Naive thymus-derived CD4-positive, alpha-beta T cell (primary cell): ENCODE measurements at regions of chr17 and their contacts with region 1.

Region 1: GRCh38 chr17:80195731-80196529 is 24.2 kb downstream of the SGSH start:
- DNase-seq: peak; percentile 33 to 64 (median 54)
- ATAC-seq: peak; percentile 80
- H3K4me3 ChIP-seq: no peak overlapping the region
- H3K4me3 Mint-ChIP-seq: no peak overlapping the region
- H3K27ac ChIP-seq: no peak overlapping the region
- H3K27ac Mint-ChIP-seq: peak overlapping the region in 5 of 9 donors; percentile 12 to 81 (median 68)
- H3K4me1 ChIP-seq: no peaks in the 10 kb centered on the region
- H3K4me1 Mint-ChIP-seq: peaks cover 0 to 5% (median 0%) of the 10 kb centered on the region in 7 donors
- H3K27me3 ChIP-seq: no peaks in the 10 kb centered on the region
- H3K27me3 Mint-ChIP-seq: peaks cover 0 to 12% (median 7%) of the 10 kb centered on the region in 5 donors

Region 2: DNA sequence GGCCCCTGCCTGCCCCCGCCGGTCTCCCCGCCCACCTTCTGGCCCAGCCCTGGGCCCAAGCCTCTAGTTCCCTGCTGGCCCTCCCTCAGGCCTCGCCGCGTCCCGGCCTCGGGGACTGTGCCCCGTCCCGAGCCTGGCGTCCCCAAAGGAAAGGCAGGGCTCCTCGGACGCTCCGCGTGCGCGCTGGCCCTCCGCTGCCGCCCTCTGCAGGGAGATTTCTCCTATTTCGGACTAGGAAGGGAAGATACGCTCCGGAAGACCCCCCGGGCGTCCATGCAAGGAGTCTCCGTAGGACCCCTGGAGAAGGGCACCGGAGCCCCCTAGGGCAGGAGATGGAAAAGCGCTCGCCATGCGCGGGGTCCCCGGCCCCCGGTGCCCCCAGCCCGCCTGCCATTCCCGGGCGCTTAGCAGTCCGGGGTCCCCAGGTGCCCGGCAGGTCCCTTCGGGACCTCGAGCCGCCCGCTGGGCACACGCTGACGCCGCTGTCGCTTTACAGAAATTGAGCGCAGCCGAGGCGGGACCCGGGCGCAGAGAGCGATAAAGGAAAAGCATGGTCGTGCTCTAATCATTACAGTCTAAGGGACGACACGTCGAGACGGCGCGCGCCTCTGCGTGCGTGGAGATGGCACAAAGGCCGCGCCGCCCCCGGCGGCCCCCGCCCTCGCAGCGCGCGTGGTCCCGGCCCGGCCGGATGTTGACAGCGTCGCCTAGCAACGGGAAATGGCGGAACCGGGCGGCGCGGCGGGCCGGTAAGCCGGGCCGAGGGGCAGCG is 159.8 kb before region 1 on chr17 and contains the start of gene CCDC40:
- CTCF ChIA-PET with region 1: no interaction called
- POLR2A ChIA-PET with region 1: no interaction called
- intact Hi-C with region 1: no loop called
- DNase-seq: peak; percentile 66 to 85 (median 78)
- ATAC-seq: peak; percentile 91
- H3K4me3 ChIP-seq: peak within 1 kb of the TSS; percentile 81
- H3K4me3 Mint-ChIP-seq: peak within 1 kb of the TSS; percentile 78 to 94 (median 85)
- H3K27ac ChIP-seq: peak within 1 kb of the TSS; percentile 76
- H3K27ac Mint-ChIP-seq: peak within 1 kb of the TSS; percentile 60 to 96 (median 84)
- H3K4me1 ChIP-seq: peaks cover 4 to 6% of the 10 kb centered on the region in 2 donors
- H3K4me1 Mint-ChIP-seq: peaks cover 5 to 18% (median 9%) of the 10 kb centered on the region in 7 donors
- H3K27me3 ChIP-seq: peaks cover 0 to 3% of the 10 kb centered on the region in 2 donors
- H3K27me3 Mint-ChIP-seq: peaks cover 0 to 63% (median 10%) of the 10 kb centered on the region in 5 donors
- total RNA-seq, gene CCDC40: 0.43 to 3.0 (median 0.79) TPM

Region 3: GRCh38 chr17:80219013-80219762 is 23.3 kb after region 1 on chr17:
- CTCF ChIA-PET with region 1: interaction called, 3 read pairs
- POLR2A ChIA-PET with region 1: interaction called, 5 read pairs
- intact Hi-C with region 1: loop called in 1 of 2 experiments (anchors 1 kb)
- DNase-seq: peak; percentile 77 to 90 (median 86)
- ATAC-seq: peak; percentile 90
- H3K4me3 ChIP-seq: peak overlapping the region; percentile 84
- H3K4me3 Mint-ChIP-seq: peak overlapping the region; percentile 86 to 96 (median 92)
- H3K27ac ChIP-seq: peak overlapping the region; percentile 93
- H3K27ac Mint-ChIP-seq: peak overlapping the region; percentile 86 to 98 (median 95)
- H3K4me1 ChIP-seq: peaks cover 13 to 30% of the 10 kb centered on the region in 2 donors
- H3K4me1 Mint-ChIP-seq: peaks cover 21 to 40% (median 26%) of the 10 kb centered on the region in 7 donors
- H3K27me3 ChIP-seq: no peaks in the 10 kb centered on the region
- H3K27me3 Mint-ChIP-seq: peaks cover 0 to 3% (median 0%) of the 10 kb centered on the region in 5 donors

Region 4: GRCh38 chr17:80361495-80362220 is 165.7 kb after region 1 on chr17:
- CTCF ChIA-PET with region 1: interaction called, 5 read pairs
- POLR2A ChIA-PET with region 1: no interaction called
- intact Hi-C with region 1: loop called in 1 of 2 experiments (anchors 1 kb)
- DNase-seq: peak in 4 of 9 donors; percentile 10 to 21 (median 18)
- ATAC-seq: no peak
- H3K4me3 ChIP-seq: no peak overlapping the region
- H3K4me3 Mint-ChIP-seq: no peak overlapping the region
- H3K27ac ChIP-seq: no peak overlapping the region
- H3K27ac Mint-ChIP-seq: peak overlapping the region in 2 of 9 donors; percentile 28 to 55
- H3K4me1 ChIP-seq: no peaks in the 10 kb centered on the region
- H3K4me1 Mint-ChIP-seq: no peaks in the 10 kb centered on the region
- H3K27me3 ChIP-seq: no peaks in the 10 kb centered on the region
- H3K27me3 Mint-ChIP-seq: no peaks in the 10 kb centered on the region

Region 5: GRCh38 chr17:80414803-80415625 is 219.1 kb after region 1 on chr17 and contains the start of gene ENDOV:
- CTCF ChIA-PET with region 1: no interaction called
- POLR2A ChIA-PET with region 1: no interaction called
- intact Hi-C with region 1: no loop called
- DNase-seq: peak; percentile 87 to 97 (median 92)
- ATAC-seq: peak; percentile 94
- H3K4me3 ChIP-seq: peak within 1 kb of the TSS; percentile 74
- H3K4me3 Mint-ChIP-seq: peak within 1 kb of the TSS; percentile 78 to 92 (median 88)
- H3K27ac ChIP-seq: peak within 1 kb of the TSS; percentile 83
- H3K27ac Mint-ChIP-seq: peak within 1 kb of the TSS; percentile 47 to 94 (median 77)
- H3K4me1 ChIP-seq: peaks cover 4 to 16% of the 10 kb centered on the region in 2 donors
- H3K4me1 Mint-ChIP-seq: peaks cover 12 to 40% (median 32%) of the 10 kb centered on the region in 7 donors
- H3K27me3 ChIP-seq: peaks cover 0 to 4% of the 10 kb centered on the region in 2 donors
- H3K27me3 Mint-ChIP-seq: peaks cover 5 to 32% (median 15%) of the 10 kb centered on the region in 5 donors
- total RNA-seq, gene ENDOV: 20.3 to 26.5 (median 21.7) TPM

Region 6: GRCh38 chr17:80981062-80981902 is 785.4 kb after region 1 on chr17:
- CTCF ChIA-PET with region 1: no interaction called
- POLR2A ChIA-PET with region 1: no interaction called
- intact Hi-C with region 1: loop called in 1 of 2 experiments (anchors 2 kb)
- DNase-seq: peak in 7 of 9 donors; percentile 28 to 64 (median 50)
- ATAC-seq: peak; percentile 64
- H3K4me3 ChIP-seq: no peak overlapping the region
- H3K4me3 Mint-ChIP-seq: peak overlapping the region in 7 of 10 donors; percentile 22 to 75 (median 61)
- H3K27ac ChIP-seq: no peak overlapping the region
- H3K27ac Mint-ChIP-seq: peak overlapping the region in 2 of 9 donors; percentile 33 to 66
- H3K4me1 ChIP-seq: no peaks in the 10 kb centered on the region
- H3K4me1 Mint-ChIP-seq: peaks cover 8 to 12% (median 10%) of the 10 kb centered on the region in 7 donors
- H3K27me3 ChIP-seq: no peaks in the 10 kb centered on the region
- H3K27me3 Mint-ChIP-seq: peaks cover 8 to 22% (median 10%) of the 10 kb centered on the region in 5 donors